CD4-positive, alpha-beta T cell (primary cell): ENCODE measurements at regions of chr12 and their contacts with region 1.

Region 1: GRCh38 chr12:89762498-89763188 is 54.0 kb upstream of the ATP2B1 start:
- DNase-seq: peak in 3 of 14 experiments; percentile 25 to 58 (median 29)
- ATAC-seq: no peak
- H3K4me3 ChIP-seq: no peak overlapping the region
- H3K4me3 Mint-ChIP-seq: no peak overlapping the region
- H3K27ac ChIP-seq: no peak overlapping the region
- H3K27ac Mint-ChIP-seq: no peak overlapping the region
- H3K4me1 ChIP-seq: peaks cover 15% of the 10 kb centered on the region
- H3K4me1 Mint-ChIP-seq: peaks cover 67% of the 10 kb centered on the region
- H3K27me3 ChIP-seq: no peaks in the 10 kb centered on the region
- H3K27me3 Mint-ChIP-seq: no peaks in the 10 kb centered on the region
- CTCF ChIP-seq: no peak

Region 2: GRCh38 chr12:89949457-89950195 is 187.0 kb after region 1 on chr12:
- CTCF ChIA-PET with region 1: no interaction called
- POLR2A ChIA-PET with region 1: no interaction called
- intact Hi-C with region 1: loop called (anchors 1 to 5 kb)
- DNase-seq: peak in 11 of 14 experiments; percentile 15 to 94 (median 39)
- ATAC-seq: peak; percentile 91
- H3K4me3 ChIP-seq: no peak overlapping the region
- H3K4me3 Mint-ChIP-seq: peak overlapping the region; percentile 35
- H3K27ac ChIP-seq: peak overlapping the region in 1 of 2 donors; percentile 78
- H3K27ac Mint-ChIP-seq: peak overlapping the region; percentile 61
- H3K4me1 ChIP-seq: peaks cover 18% of the 10 kb centered on the region
- H3K4me1 Mint-ChIP-seq: peaks cover 55% of the 10 kb centered on the region
- H3K27me3 ChIP-seq: no peaks in the 10 kb centered on the region
- H3K27me3 Mint-ChIP-seq: no peaks in the 10 kb centered on the region
- CTCF ChIP-seq: peak; percentile 58